ENCODE measurements at regions of chr1 and their contacts with region 1.

Region 1: DNA sequence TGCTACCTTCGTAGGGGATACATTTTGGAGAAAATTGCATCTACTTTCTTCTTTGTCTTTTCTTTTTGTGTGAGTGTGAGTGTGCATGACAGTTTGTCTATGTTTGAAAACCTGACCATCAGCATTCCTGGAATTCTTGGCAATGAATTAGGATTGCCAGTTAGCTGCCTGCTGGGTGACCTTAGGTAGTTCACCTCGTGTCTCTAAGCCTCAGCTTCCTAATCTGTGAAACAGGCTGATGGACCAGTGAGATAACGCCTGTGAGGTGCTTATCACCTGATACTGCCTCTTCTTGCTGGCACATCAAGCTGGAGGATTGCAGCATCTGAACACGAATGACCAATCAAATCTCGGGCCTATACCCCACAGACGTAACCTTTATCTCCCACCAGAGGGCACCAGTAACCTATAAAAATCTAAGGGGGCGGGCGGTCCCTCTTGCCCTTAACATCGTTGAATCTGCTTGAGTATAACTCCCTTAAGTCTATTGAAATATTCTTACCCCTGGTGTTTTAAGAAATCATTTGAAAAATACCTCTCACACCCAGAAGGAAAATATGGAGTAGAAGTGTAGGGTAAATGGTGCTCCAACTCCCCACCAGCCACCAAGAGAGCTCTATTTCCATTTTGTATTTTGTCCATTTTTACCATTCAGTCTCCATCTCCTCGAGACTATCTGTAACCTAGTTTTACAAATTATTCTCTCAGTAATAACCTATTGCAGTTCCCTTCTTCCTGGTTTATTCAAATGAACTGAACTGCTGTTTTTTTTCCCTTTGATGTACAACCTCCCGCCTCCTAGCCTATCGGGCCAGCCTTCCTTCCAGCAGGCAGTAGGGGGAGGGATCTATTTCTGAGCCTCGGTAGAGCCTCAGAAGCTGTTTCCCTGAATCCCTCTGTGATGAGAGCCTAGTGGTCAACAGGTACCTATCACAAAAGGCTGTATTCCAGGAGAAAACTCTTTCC is 49.7 kb downstream of the MDM4 start:
- DNase-seq: no peak
- H3K4me3 ChIP-seq: no peak overlapping the region
- CTCF ChIP-seq: no peak
- POLR2A ChIP-seq: no peak

Region 2: DNA sequence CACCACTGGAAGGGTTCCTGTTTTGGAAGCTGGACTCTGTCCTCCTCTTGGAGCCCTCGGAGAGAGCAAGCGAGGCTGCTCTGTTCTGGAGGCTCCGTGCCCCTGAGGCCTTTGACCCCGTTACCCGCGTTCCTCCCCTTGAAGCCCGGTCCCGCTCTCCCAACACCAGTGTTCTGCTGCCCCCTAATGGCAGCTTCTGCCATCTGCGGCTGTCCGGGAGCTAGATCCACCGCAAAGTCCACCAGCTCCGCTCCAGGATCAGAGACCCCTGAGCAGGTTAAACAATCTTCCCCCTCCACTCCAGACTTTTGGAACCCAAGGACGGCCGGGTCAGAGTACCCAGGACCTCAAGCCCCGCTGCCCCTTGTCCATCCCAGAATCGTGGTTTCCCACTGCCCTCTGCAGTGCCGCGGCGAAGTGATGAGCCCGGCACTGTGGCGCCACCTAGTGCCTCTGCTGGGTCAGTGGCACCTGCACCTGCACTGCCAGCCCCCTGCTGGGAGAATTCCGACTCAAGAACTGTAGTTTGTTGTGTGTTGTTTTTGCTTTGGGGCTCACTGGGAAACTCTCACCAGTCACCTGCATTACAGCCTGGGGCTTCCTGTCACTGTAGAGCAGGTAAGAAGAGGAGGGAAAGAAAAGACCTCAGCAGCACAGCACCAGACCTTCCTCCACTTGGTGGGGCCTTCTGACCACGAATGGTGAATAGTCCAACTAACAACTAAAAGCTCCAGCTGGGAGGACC is 241.2 kb after region 1 on chr1:
- intact Hi-C with region 1: loop called (anchors 10 kb)
- DNase-seq: peak; percentile 67 to 94
- H3K4me3 ChIP-seq: no peak overlapping the region
- CTCF ChIP-seq: peak in 1 of 3 donors; percentile 89
- POLR2A ChIP-seq: no peak